ENCODE measurements at regions of chr2 and their contacts with region 1.

Region 1: DNA sequence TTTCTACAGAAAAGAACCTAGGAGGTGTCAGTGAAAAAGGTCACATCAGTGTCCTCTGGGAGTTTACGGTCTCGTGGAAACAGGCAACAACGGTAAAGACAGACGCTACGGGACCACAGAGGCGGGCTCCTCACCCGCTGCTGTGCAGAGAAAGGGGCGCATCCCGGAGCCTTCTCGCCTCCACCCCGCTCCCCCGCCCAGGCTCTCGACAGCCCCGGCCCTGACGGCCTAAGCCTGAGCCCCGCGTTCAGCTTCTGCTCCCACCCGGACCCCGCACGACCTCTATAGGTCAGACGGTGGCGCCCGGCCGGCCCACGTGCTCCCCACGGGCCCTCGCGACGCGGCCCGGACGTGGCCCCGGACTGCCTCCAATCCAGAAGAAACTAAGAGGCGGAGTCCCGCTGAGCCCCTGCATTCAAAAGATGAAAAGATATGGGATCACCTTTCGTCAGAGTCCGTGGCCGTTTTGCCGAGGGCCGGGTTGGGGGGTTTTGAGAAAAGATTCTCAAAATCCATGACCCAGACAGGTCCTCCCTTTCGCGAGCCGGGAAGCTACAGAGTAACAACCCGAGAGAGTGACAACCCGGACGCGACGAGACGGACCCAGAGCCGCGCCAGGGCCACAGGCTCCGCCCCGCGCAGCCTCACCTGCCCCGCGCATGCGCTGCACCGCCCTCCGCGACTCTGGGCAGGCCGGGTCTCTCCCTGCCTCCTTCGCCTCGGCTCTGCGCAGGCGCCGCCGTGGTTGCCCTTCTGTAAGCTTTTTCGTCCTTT is at the start of gene ZC3H8:
- DNase-seq: peak; percentile 93 to 97
- ATAC-seq: peak; percentile 99 to 100 (median 99)
- H3K4me3 ChIP-seq: peak within 1 kb of the TSS; percentile 52 to 84 (median 73)
- H3K27ac ChIP-seq: peak within 1 kb of the TSS; percentile 33 to 91 (median 86)
- H3K4me1 ChIP-seq: peaks cover 0 to 42% (median 14%) of the 10 kb centered on the region in 9 donors
- H3K27me3 ChIP-seq: no peaks in the 10 kb centered on the region
- CTCF ChIP-seq: peak in 3 of 9 donors; percentile 10 to 26 (median 15)
- total RNA-seq, gene ZC3H8: 7.0 to 13.3 (median 11.0) TPM

Region 2: DNA sequence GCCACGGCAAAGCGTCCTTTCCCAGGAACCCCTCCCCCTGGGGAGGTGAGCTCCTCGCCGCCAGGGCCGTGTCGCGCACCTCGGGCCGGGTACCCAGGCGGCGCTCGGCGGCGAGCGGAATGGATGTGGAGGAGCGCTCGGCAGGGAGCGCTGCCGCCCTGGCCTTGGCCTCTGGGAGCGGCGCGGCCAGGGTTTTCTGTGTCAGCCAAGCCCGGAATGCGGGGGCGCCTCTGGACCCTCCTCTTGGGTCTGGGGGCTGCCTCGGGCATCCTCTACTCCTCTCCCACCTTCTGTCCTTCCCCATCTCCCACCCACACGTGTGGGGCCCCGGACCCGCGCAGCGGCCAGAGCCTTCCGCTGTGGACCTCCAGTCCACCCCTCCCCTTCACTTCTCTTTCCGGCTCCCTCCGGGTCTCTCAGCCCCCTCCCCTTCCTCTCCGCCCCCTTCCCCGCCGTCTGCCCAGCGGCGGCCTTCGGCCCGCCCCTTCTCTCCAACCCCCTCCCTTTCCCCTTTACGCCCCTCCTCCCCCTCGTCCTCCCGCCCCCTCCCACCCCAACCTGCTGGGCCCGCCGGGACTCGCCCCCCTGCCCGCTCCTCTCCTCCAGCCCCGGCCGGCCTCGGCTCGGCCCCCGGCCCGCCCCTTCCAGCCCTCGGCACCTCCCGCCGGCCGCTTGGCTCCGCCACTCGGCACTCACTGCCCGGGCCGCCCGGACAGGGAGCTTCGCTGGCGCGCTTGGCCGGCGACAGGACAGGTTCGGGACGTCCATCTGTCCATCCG is 356.5 kb before region 1 on chr2 and contains the start of gene MERTK:
- intact Hi-C with region 1: loop called in 1 of 10 experiments (anchors 10 kb)
- DNase-seq: peak; percentile 90 to 91
- ATAC-seq: peak; percentile 91 to 96 (median 94)
- H3K4me3 ChIP-seq: peak within 1 kb of the TSS; percentile 61 to 97 (median 92)
- H3K27ac ChIP-seq: peak within 1 kb of the TSS; percentile 76 to 95 (median 88)
- H3K4me1 ChIP-seq: peaks cover 0 to 50% (median 34%) of the 10 kb centered on the region in 9 donors
- H3K27me3 ChIP-seq: peaks cover 0 to 14% (median 0%) of the 10 kb centered on the region in 7 donors
- CTCF ChIP-seq: peak; percentile 32 to 91 (median 64)
- total RNA-seq, gene MERTK: 2.3 to 8.9 (median 3.9) TPM

Region 3: DNA sequence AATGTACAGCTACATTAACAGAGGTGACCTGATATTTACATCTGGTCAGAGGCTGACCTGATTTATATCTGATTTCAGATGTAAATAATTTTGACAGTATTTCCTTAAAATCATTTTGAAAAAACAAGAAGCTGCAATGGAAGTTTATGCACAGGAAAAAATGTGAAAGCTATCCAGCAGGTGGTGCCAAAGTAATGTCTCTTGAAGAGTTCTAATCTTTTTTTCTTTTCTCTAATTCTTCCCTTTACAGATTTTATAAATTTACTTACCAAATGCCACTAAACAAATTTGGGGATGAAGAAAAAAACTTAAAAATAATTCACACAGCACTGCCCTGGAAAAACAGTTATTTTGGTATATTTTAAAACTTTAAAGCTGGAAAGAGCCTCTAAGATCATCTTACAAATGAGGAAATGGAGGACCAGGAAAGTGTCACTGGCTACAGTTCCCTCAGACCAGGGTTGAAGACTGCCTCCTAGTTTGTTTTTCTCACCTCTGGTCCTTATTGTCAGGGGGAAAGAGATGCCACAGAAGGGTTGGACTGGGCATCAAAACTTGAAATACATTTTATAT is 132.9 kb before region 1 on chr2:
- intact Hi-C with region 1: loop called in 4 of 10 experiments (anchors 5 to 10 kb)
- DNase-seq: no peak
- ATAC-seq: no peak
- H3K4me3 ChIP-seq: no peak overlapping the region
- H3K27ac ChIP-seq: no peak overlapping the region
- H3K4me1 ChIP-seq: no peaks in the 10 kb centered on the region
- H3K27me3 ChIP-seq: no peaks in the 10 kb centered on the region
- CTCF ChIP-seq: peak; percentile 38 to 74 (median 66)

Region 4: DNA sequence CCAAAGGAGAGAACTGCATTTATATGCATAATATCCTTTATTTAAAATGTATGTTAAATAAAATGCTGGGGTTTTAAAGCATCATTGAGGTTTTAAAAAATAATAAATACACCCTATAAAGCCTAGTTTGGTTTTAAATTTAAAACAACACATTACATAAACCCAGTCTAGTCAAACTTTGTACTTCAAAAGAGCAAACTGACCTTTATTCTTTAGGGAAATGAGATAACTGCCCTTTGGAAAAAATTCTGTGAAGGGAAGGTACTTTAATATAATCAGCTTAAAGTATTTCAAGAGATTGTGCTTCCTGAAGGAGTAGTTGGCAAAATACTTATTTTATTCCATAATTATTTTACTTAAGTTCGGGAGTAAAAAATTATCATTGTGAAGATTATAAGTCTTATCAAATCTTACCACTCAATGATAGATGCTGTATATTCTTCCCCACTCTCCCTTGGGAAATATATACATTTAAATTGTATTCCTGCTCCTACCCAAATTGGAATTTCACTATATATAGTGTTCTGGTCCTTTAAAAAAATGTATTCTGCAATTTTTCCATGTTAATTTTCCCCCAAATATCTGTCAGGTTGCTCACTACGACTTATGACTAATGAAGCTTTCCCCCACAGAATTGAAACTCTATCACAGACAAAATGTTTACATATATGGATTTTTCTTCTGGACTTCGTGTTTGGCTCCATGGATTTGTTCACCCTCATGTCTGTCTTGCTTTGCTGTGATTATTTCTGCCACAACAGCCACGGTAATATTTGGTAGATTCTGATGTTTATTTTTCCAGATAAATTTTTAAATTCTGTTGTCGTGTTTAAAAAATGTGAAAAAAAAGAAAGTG is 62.9 kb after region 1 on chr2:
- intact Hi-C with region 1: loop called in 1 of 10 experiments (anchors 10 kb)
- DNase-seq: no peak
- ATAC-seq: no peak
- H3K4me3 ChIP-seq: no peak overlapping the region
- H3K27ac ChIP-seq: no peak overlapping the region
- H3K4me1 ChIP-seq: no peaks in the 10 kb centered on the region
- H3K27me3 ChIP-seq: no peaks in the 10 kb centered on the region
- CTCF ChIP-seq: no peak

Region 5: DNA sequence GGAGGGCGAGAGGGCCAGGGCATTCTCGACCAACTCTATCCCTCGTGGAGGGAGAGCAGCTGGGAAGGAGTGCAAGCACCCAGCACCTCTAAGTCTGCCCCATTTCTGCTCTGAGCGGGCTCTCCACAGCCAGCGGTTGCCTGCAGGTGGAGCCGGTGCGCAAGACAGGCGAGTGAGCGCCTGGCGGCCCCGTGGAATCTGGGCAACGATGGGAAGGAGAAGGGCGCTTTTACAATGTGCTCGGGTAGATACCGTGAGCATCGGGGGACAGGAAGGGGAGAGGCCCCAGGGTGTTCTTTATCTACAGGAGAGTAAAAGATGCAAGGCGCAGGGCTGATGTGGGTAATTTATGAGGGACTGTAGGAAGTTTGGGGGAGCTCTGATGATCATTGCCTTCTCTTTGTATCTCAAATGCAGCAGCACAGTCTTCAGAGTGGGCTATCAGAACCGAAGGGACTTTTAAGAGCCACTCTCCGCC is 226.4 kb after region 1 on chr2:
- intact Hi-C with region 1: loop called in 1 of 10 experiments (anchors 5 kb)
- DNase-seq: peak; percentile 81 to 83
- ATAC-seq: peak; percentile 85 to 97 (median 90)
- H3K4me3 ChIP-seq: peak overlapping the region; percentile 54 to 94 (median 84)
- H3K27ac ChIP-seq: peak overlapping the region; percentile 57 to 92 (median 90)
- H3K4me1 ChIP-seq: peaks cover 9 to 33% (median 24%) of the 10 kb centered on the region in 9 donors
- H3K27me3 ChIP-seq: no peaks in the 10 kb centered on the region
- CTCF ChIP-seq: peak; percentile 64 to 93 (median 83)

Region 6: GRCh38 chr2:112606488-112606902 is 351.8 kb after region 1 on chr2:
- intact Hi-C with region 1: no loop called
- DNase-seq: no peak
- ATAC-seq: no peak
- H3K4me3 ChIP-seq: no peak overlapping the region
- H3K27ac ChIP-seq: no peak overlapping the region
- H3K4me1 ChIP-seq: no peaks in the 10 kb centered on the region
- H3K27me3 ChIP-seq: no peaks in the 10 kb centered on the region
- CTCF ChIP-seq: no peak

Measured in heart right ventricle (tissue), 16 donors.